ENCODE measurements at regions of chr6 and their contacts with region 1.

Region 1: DNA sequence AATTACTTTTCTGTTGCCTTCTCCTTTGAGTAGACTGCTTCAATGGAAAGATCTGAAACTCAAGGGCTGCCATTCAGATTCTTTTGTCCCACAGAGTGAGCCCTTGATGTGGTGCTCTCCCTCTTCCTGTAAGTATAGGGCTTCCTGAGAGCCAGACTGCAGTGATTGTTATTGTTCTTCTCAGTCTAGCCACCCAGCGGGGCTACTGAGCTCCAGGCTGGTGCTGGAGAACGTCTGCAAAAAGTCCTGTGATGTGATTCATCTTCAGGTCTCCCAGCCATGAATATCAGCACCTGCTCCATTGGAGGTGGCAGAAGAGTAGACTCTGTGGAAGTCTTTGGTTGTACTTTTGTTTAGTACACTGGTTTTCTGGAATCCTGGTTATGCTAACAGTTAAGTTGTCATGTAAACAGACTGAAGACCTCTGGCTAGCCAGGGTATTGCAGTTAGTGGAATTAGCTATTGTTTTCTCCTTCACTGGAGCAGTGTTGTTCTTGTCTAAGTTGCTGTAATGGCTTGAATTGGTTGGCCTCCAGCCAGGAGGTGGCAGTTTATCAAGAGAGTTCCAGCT is 240.9 kb downstream of the COL12A1 start:
- DNase-seq: no peak
- H3K4me3 ChIP-seq: no peak overlapping the region
- H3K27ac ChIP-seq: no peak overlapping the region
- H3K4me1 ChIP-seq: no peaks in the 10 kb centered on the region
- H3K27me3 ChIP-seq: no peaks in the 10 kb centered on the region
- CTCF ChIP-seq: peak in 1 of 3 experiments; percentile 30; a peak in 2 of 4 replicates
- EP300 ChIP-seq: no peak
- POLR2A ChIP-seq: no peak
- RAD21 ChIP-seq: peak in 1 of 2 experiments; percentile 11; a peak in 1 of 4 replicates

Region 2: DNA sequence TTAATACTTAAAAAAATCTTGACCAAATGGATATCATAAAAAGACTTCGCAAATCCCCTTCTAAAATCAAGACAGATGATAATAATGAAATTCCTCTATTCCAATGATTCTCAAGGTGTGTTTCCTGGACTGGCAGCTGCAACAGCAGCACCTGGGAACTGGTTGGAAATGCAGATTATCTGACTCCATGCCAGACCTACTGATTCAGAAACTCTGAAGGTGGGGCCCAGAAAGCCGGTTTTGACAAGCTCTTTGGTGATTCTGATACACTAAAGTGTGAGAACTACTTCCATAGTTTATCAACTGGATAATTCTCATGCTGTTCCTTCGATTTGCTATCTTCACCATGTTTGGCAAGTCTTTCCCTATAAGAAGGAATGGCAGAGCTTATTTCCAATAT is 11.2 kb before region 1 on chr6:
- CTCF ChIA-PET with region 1: interaction called, 10 read pairs
- POLR2A ChIA-PET with region 1: no interaction called
- DNase-seq: no peak
- H3K4me3 ChIP-seq: no peak overlapping the region
- H3K27ac ChIP-seq: no peak overlapping the region
- H3K4me1 ChIP-seq: no peaks in the 10 kb centered on the region
- H3K27me3 ChIP-seq: no peaks in the 10 kb centered on the region
- CTCF ChIP-seq: no peak
- EP300 ChIP-seq: no peak
- POLR2A ChIP-seq: no peak
- RAD21 ChIP-seq: no peak